Activated T-helper 2 cell treated with anti-CD3 and anti-CD28 coated beads, Interferon-gamma antibody, Interleukin-2, Interleukin-4, amounts not matched to agents 10 μg/mL and 5 μg/mL and 100 μg/mL, durations not matched to agents 14 hours and 24 hours and 36 hours (primary cell): ENCODE measurements at regions of chr1 and their contacts with region 1.

Region 1: GRCh38 chr1:100132566-100133477 is at the starts of genes SASS6 and TRMT13:
- DNase-seq: peak; percentile 94
- H3K4me3 Mint-ChIP-seq: peak within 1 kb of the TSS; percentile 97
- H3K27ac Mint-ChIP-seq: peak within 1 kb of the TSS; percentile 93
- H3K4me1 Mint-ChIP-seq: peaks cover 31% of the 10 kb centered on the region
- H3K27me3 Mint-ChIP-seq: no peaks in the 10 kb centered on the region
- total RNA-seq, gene SASS6: 15.2 and 15.7 TPM in 2 replicates
- total RNA-seq, gene TRMT13: 20.2 and 24.6 TPM in 2 replicates

Region 2: GRCh38 chr1:99808391-99809115 is 324.3 kb before region 1 on chr1:
- intact Hi-C with region 1: loop called (anchors 1 kb)
- DNase-seq: no peak
- H3K4me3 Mint-ChIP-seq: no peak overlapping the region
- H3K27ac Mint-ChIP-seq: peak overlapping the region; percentile 47
- H3K4me1 Mint-ChIP-seq: peaks cover 17% of the 10 kb centered on the region
- H3K27me3 Mint-ChIP-seq: peaks cover 17% of the 10 kb centered on the region

Region 3: DNA sequence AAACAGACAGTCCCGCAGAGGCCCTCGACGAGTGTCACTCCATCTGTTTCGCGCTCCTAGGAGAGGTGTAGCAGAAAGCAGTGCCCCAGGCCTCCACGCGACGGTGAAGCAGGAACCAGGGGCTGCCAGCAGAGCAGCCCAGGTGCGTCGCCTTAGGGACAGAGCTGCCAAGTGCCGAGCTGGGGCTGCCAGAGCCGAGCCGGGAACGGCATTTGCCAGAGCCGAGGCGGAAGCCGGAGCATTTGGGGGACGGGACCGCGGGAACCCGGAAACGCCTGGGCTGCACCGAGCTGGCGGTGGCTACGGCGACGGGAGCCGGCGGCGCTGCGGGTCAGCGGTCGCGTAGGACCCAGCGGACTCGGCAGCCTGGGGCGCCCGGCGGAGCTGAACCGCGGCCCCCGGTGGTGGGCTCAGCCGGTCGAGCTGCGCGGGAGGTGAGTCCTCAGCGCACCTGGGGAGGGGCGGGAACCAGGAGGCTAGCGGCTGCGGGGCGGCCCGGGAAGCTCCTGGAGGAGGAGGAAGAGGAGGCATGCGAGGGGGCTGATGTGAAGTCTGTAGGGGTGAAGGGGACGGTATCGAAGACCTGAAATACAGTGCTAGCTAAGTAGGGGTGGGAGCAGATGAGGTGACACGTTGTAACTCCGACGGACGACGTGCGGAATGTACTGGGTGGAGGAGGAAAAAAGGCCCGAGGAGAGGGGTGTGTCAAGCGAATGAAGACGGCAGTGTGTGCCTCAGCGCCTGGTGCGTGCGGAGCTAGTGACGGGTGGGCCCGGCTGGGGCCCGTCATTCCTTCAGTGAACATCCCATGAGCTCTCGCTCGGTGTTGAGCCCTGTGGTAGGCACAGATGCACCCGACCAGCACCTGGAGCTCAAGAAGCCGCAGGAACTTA is 162.8 kb before region 1 on chr1 and contains the start of gene SLC35A3:
- intact Hi-C with region 1: loop called (anchors 2 kb)
- DNase-seq: peak; percentile 76
- H3K4me3 Mint-ChIP-seq: peak within 1 kb of the TSS; percentile 98
- H3K27ac Mint-ChIP-seq: peak within 1 kb of the TSS; percentile 92
- H3K4me1 Mint-ChIP-seq: peaks cover 22% of the 10 kb centered on the region
- H3K27me3 Mint-ChIP-seq: no peaks in the 10 kb centered on the region
- total RNA-seq, gene SLC35A3: 15.0 and 15.9 TPM in 2 replicates

Region 4: GRCh38 chr1:100184536-100184935 is 51.7 kb after region 1 on chr1:
- intact Hi-C with region 1: no loop called
- DNase-seq: no peak
- H3K4me3 Mint-ChIP-seq: no peak overlapping the region
- H3K27ac Mint-ChIP-seq: no peak overlapping the region
- H3K4me1 Mint-ChIP-seq: peaks cover 4% of the 10 kb centered on the region
- H3K27me3 Mint-ChIP-seq: no peaks in the 10 kb centered on the region

Region 5: GRCh38 chr1:100229681-100230443 is 97.0 kb after region 1 on chr1:
- intact Hi-C with region 1: loop called (anchors 5 kb)
- DNase-seq: no peak
- H3K4me3 Mint-ChIP-seq: no peak overlapping the region
- H3K27ac Mint-ChIP-seq: no peak overlapping the region
- H3K4me1 Mint-ChIP-seq: peaks cover 5% of the 10 kb centered on the region
- H3K27me3 Mint-ChIP-seq: no peaks in the 10 kb centered on the region

Region 6: DNA sequence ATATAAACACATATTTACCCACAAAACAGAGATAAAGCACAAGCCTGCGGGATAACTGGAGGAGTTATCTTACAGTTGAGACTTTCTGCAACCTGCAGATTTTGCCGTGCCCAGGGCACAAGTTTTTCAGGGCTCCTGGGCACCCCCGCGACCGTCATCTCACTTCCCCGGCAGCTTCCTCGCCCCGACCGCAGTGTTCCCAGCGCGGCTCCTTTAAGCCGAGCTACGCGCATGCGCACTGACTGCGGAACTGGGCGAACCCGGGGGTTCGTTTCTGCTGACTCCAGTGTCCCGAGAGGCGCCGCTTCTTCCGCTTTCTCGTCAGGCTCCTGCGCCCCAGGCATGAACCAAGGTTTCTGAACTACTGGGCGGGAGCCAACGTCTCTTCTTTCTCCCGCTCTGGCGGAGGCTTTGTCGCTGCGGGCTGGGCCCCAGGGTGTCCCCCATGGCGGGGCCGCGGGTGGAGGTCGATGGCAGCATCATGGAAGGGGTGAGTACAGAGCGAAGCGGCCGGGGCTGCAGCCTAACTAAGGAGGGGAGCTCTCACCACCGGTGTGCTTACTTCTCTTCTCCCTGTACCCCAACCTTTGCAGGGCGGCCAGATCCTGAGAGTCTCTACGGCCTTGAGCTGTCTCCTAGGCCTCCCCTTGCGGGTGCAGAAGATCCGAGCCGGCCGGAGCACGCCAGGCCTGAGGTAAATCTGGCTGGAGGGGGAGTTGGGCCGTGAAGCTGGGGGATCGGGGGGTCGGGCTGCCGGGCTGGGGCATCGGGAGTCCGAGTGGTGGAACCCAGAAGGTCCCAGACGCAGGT is 133.3 kb after region 1 on chr1 and contains the start of gene RTCA:
- intact Hi-C with region 1: loop called (anchors 1 kb)
- DNase-seq: peak; percentile 93
- H3K4me3 Mint-ChIP-seq: peak within 1 kb of the TSS; percentile 99
- H3K27ac Mint-ChIP-seq: peak within 1 kb of the TSS; percentile 99
- H3K4me1 Mint-ChIP-seq: peaks cover 25% of the 10 kb centered on the region
- H3K27me3 Mint-ChIP-seq: no peaks in the 10 kb centered on the region
- total RNA-seq, gene RTCA: 53.4 and 55.7 TPM in 2 replicates

Region 7: DNA sequence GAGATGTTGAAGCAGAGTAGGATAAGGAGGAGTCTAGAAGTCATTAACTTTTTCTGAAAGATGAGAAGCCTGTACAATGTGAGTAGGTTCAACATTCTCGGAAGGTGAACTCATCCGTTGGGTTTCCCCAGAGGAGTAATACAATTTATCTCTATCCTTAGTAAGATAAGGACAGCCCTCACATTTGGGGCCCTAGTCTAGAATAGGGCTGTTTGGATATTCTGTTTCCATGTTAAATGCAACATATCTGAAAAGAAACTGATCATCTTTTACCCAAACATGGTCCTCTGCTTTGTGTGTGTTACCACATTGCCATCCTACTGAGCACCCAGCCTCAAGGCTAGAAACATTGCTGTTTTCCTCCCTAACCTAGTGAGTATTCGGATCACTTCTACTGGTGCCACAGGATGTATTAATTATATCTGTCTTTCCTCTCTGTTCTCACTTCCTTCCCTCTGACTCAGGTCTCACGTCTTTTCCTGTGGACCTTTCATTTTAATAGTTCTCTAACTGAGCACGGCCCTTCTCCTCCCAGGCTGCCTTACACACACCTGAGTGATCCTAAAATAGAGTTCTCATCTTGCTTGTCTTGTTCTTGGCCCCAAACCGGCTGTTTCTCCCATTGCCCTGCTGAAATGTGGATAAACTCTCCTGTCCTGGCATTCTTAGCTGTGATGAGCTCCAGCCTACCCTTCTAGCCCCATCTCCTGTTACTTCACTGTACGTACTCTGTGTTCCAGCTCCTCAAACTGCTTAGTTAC is 311.2 kb after region 1 on chr1:
- intact Hi-C with region 1: loop called (anchors 5 kb)
- DNase-seq: peak; percentile 21
- H3K4me3 Mint-ChIP-seq: peak overlapping the region; percentile 68
- H3K27ac Mint-ChIP-seq: peak overlapping the region; percentile 92
- H3K4me1 Mint-ChIP-seq: peaks cover 75% of the 10 kb centered on the region
- H3K27me3 Mint-ChIP-seq: no peaks in the 10 kb centered on the region

Region 8: GRCh38 chr1:100895540-100896483 is 763.0 kb after region 1 on chr1 and contains the start of gene SLC30A7:
- intact Hi-C with region 1: loop called (anchors 1 kb)
- DNase-seq: peak; percentile 92
- H3K4me3 Mint-ChIP-seq: peak within 1 kb of the TSS; percentile 95
- H3K27ac Mint-ChIP-seq: peak within 1 kb of the TSS; percentile 97
- H3K4me1 Mint-ChIP-seq: peaks cover 41% of the 10 kb centered on the region
- H3K27me3 Mint-ChIP-seq: no peaks in the 10 kb centered on the region
- total RNA-seq, gene SLC30A7: 38.6 and 39.4 TPM in 2 replicates